PC-3 (cell line): ENCODE measurements at regions of chr6 and their contacts with region 1.

Region 1: DNA sequence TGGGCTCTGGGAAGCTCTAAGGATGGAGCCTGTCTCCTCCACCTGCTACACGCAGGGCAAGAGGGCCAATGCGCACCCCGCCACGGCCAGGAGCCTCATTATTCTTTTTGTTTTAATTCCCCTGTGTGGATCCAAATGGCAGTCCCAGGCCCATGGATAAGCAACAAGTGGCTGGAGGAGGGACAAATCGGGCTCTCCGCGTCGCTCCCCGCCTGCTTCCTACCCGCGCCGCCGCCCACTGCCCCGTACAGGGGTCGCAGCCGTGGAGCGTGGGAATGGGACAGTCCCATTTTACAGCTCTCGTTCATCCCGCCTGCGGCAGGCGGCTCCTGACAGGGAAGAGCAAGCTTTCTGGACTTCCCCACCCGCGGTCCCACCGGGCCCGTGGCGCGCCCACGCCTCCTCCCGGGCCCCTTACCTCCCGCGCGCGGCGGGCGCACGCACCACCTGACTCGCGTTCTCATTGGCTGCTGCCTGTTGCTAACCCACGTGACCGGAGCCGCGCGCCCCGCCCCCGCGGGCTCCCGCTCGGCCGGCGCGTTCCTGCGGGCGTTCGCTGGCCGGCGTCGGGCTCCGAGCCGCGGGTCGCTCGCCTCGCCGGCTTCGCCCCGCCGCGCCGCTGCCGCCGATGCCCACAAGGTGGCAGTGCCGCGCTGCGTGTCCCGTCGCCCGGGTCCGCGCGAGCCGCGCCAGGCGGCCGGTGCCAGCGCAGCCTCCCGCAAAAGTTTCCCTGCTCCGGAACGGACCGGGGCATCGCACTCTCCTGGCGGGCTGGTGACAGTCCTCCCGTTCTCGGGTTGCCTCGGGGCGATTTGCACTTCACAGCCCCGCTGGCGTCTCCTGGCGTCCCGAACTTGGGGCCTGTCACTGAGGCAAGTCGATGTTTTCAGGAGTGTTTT is 93.3 kb downstream of the CD83 start:
- DNase-seq: peak; percentile 94
- ATAC-seq: peak; percentile 91
- H3K4me3 ChIP-seq: peak overlapping the region; percentile 82
- H3K27ac ChIP-seq: peak overlapping the region; percentile 61
- H3K4me1 ChIP-seq: peaks cover 20% of the 10 kb centered on the region
- H3K27me3 ChIP-seq: no peaks in the 10 kb centered on the region
- CTCF ChIP-seq: peak; percentile 55

Region 2: DNA sequence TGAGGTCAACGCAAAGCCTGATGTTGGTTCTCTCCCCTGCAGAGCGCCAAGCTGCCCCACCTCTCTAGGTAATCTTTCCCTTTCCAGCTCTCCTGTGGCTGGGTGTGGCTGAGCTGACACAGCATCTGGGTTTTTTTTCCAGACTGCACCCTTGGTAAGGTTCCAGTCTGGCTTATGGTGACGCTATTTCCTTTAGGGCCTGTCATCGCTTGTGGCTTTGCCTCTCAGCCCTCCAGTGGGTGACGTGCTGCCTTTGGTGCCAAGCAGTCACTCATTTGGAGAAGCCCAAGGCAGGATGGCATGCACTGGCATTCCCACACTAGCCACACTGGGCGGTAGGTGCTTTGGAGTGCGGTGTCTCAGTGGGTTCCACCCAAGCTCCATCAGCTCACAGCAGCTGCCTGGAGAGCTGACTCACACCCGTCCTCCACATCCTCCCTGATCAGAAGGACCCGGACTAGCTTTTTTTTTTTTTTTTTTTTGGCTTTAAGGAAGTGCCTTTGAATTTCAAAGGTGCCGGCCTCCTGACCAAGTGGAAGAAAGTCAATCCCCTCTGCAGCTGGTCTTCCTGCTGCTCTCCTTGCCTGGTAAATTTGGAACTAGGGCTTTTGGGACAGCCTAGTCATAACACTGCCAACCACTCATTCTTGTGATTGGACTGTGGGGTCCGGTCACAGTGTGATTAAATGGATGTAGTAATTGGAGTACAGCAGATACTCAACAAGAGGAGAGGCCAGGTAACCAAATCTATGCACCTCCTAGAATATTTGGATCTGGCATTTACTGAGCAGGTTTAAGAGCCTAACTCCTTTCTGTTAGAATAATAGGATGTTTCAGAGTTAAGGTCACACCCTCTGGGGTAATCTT is 60.2 kb after region 1 on chr6:
- CTCF ChIA-PET with region 1: no interaction called
- POLR2A ChIA-PET with region 1: no interaction called
- intact Hi-C with region 1: loop called (anchors 2 kb)
- DNase-seq: peak; percentile 99
- ATAC-seq: peak; percentile 96
- H3K4me3 ChIP-seq: peak overlapping the region; percentile 44
- H3K27ac ChIP-seq: peak overlapping the region; percentile 100
- H3K4me1 ChIP-seq: peaks cover 38% of the 10 kb centered on the region
- H3K27me3 ChIP-seq: no peaks in the 10 kb centered on the region
- CTCF ChIP-seq: no peak

Region 3: GRCh38 chr6:14431385-14432330 is 220.7 kb after region 1 on chr6:
- CTCF ChIA-PET with region 1: no interaction called
- POLR2A ChIA-PET with region 1: no interaction called
- intact Hi-C with region 1: no loop called
- DNase-seq: no peak
- ATAC-seq: no peak
- H3K4me3 ChIP-seq: no peak overlapping the region
- H3K27ac ChIP-seq: no peak overlapping the region
- H3K4me1 ChIP-seq: 0 out of 2 replicates have a peak, but pooled peaks cover 8% of the 10 kb centered on the region
- H3K27me3 ChIP-seq: no peaks in the 10 kb centered on the region
- CTCF ChIP-seq: no peak

Region 4: GRCh38 chr6:14452567-14453527 is 241.9 kb after region 1 on chr6:
- CTCF ChIA-PET with region 1: no interaction called
- POLR2A ChIA-PET with region 1: no interaction called
- intact Hi-C with region 1: loop called (anchors 10 kb)
- DNase-seq: no peak
- ATAC-seq: no peak
- H3K4me3 ChIP-seq: no peak overlapping the region
- H3K27ac ChIP-seq: no peak overlapping the region
- H3K4me1 ChIP-seq: peaks cover 6% of the 10 kb centered on the region
- H3K27me3 ChIP-seq: no peaks in the 10 kb centered on the region
- CTCF ChIP-seq: no peak

Region 5: GRCh38 chr6:14693301-14694192 is 482.6 kb after region 1 on chr6:
- CTCF ChIA-PET with region 1: no interaction called
- POLR2A ChIA-PET with region 1: no interaction called
- intact Hi-C with region 1: no loop called
- DNase-seq: no peak
- ATAC-seq: no peak
- H3K4me3 ChIP-seq: no peak overlapping the region
- H3K27ac ChIP-seq: no peak overlapping the region
- H3K4me1 ChIP-seq: no peaks in the 10 kb centered on the region
- H3K27me3 ChIP-seq: no peaks in the 10 kb centered on the region
- CTCF ChIP-seq: no peak

Region 6: DNA sequence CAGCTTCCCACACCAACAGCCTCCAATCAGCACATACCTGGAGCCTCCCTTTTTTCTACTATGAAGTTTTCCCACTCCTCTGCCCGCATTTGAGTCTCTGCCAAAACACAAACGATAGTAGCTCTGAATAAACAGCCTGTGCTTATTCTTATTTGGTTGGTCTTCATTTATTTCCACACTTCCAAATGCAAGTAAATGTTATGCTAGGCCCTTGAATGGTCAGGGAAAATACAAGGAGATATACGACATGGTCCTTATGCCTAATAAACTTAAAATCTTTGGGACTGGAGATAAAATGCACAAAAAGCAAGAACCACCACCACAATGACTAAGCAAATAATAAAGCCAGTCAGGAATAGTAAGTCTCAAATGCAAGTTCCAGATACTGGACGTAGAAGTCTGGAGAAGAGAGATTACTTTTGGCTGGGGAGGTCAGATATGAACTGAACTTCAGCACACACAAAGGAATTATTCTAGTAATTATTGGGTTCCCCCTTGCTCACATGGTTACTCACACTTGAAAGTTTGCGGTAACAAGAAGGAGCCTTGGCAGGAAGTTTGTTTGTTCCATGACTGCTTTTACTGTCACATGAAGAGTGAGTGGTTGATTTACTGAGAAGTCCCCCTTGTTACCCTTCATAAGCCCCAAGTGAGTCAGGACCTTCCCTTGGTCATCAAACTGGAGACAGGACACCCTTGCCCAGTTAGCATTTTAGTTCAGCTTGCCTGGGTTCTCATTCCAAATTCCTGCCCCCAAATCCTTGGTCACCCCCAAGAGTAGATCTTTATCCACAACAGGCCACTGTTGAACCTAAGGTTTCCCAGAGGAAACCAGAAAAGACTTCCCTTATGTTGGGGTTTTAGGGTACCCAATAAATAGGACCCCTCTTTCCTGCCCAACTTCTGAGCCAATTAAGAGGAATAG is 523.8 kb after region 1 on chr6:
- CTCF ChIA-PET with region 1: interaction called, 4 read pairs
- POLR2A ChIA-PET with region 1: no interaction called
- intact Hi-C with region 1: loop called (anchors 5 kb)
- DNase-seq: peak; percentile 98
- ATAC-seq: peak; percentile 48
- H3K4me3 ChIP-seq: peak overlapping the region; percentile 13; the same call in 1 of the 2 replicates
- H3K27ac ChIP-seq: peak overlapping the region; percentile 99
- H3K4me1 ChIP-seq: peaks cover 51% of the 10 kb centered on the region
- H3K27me3 ChIP-seq: no peaks in the 10 kb centered on the region
- CTCF ChIP-seq: no peak